ENCODE measurements at regions of chr9 and their contacts with region 1.

Region 1: DNA sequence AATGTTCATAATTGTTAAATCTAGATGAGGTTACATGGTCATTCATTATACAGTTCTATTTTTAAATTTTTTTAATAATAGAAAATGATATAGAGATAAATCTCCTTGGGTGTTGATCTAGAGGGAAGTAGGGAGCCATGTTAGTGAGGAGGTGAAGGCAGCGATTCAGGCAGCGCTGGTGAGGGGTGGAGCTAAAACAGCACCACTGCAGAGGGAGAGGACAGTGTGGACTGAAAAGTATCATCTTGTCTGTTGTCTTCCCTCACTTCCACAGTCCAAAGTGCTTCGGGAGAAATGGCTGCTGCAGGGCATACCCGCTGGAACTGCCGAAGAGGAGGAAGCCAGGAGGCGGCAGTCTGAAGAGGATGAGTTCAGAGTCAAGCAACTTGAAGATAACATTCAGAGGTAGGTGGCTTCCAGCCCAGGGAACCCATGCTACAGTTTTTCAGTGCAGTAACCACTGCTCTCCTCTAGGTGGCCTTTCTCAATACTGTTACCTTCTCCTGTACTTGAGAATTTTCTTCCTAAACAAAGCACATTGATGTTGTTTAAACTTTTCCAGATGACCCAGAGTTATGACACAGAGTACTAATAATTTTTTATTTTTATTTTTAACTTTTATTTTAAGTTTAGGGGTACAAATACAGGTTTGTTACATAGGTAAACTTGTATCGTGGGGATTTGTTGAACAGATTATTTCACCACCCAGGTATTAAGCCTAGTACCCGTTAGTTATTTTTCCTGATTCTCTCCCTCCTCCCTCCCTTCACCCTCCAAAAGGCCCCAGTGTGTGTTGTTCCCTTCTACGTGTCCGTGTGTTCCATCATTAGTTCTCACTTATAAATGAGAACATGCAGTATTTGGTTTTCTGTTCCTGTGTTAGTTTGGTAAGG is 100.5 kb downstream of the PALM2AKAP2 start:
- DNase-seq: no peak
- ATAC-seq: peak; percentile 13 to 38
- H3K4me3 ChIP-seq: no peak overlapping the region
- H3K27ac ChIP-seq: no peak overlapping the region
- H3K4me1 ChIP-seq: peaks cover 7% of the 10 kb centered on the region
- H3K27me3 ChIP-seq: no peaks in the 10 kb centered on the region

Region 2: DNA sequence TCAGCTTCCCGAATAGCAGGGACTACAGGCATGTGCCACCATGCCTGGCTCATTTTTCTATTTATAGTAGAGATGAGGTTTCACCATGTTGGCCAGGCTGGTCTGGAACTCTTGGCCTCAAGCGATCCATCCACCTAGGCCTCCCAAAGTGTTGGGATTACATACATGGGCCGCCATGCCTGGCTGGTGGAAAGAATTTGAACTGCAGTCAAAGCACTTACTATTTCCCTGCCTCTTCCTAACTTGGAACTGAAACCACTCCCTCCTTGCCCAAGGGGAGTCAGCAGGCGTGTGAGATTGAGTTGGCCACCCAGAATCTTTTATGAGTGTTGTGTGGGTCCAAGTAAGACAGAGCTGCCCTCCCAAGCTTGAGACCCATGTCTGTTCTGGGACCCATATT is 296.3 kb before region 1 on chr9:
- intact Hi-C with region 1: loop called in 1 of 4 experiments (anchors 10 kb)
- DNase-seq: no peak
- ATAC-seq: no peak
- H3K4me3 ChIP-seq: no peak overlapping the region
- H3K27ac ChIP-seq: no peak overlapping the region
- H3K4me1 ChIP-seq: peaks cover 2% of the 10 kb centered on the region
- H3K27me3 ChIP-seq: no peaks in the 10 kb centered on the region

Region 3: GRCh38 chr9:109779711-109780452 is 100.6 kb before region 1 on chr9 and contains the start of gene PALM2AKAP2:
- intact Hi-C with region 1: loop called in 1 of 4 experiments (anchors 10 kb)
- DNase-seq: peak; percentile 85 to 93 (median 91)
- ATAC-seq: peak; percentile 90
- H3K4me3 ChIP-seq: peak within 1 kb of the TSS; percentile 89
- H3K27ac ChIP-seq: peak within 1 kb of the TSS; percentile 80
- H3K4me1 ChIP-seq: peaks cover 8% of the 10 kb centered on the region
- H3K27me3 ChIP-seq: no peaks in the 10 kb centered on the region
- total RNA-seq, gene PALM2AKAP2: 82.5 to 130 (median 86.2) TPM